ENCODE measurements at regions of chr2 and their contacts with region 1.

Region 1: GRCh38 chr2:142140434-142140845 is 9.6 kb upstream of the LRP1B start:
- DNase-seq: no peak
- H3K4me3 ChIP-seq: no peak overlapping the region
- H3K27me3 ChIP-seq: no peaks in the 10 kb centered on the region
- CTCF ChIP-seq: peak; percentile 45

Region 2: DNA sequence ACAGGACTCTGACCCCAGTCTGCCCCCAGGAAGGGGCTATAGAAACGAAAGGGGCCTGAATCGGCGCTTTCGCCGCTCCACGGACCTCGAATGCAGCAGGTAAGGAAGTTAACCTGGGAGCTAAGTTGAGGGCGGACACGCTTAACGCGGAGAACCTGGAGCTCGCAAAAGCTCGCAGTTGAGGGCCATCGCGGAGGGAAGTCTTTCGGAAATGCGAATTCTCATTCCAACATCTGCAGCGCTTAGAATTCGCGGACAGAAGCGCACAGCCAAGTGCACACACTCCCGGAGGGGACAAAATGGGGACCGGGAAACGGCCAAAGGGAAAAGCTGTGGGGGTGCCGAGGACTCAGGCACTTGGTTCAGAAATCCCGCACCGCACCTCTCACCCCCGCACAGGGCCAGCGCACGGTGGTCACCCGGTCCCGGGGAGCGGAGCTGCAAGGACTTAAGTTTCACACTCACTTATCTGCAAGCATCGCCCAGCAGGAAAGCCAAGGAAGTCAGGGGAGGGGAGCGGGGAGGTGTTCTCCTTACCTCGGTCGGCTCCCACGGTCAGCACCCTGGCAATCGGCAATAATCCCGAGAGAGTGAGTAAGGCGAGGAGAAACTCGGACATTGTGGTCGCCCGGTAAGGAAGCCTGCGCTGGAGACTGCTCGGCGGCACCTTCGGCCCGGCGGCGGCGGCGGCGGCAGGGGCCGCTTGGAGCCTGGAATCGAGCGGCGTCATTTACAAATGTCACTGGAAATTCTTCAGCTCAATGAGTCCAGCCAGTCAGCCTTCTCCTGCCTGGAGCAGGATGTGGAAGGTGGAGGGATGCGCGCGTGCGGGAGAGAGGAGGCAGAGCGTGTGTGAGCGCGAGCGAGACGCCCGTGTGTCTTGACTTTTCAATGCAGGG is 10.1 kb before region 1 on chr2:
- CTCF ChIA-PET with region 1: interaction called, 24 read pairs
- POLR2A ChIA-PET with region 1: no interaction called
- DNase-seq: no peak
- H3K4me3 ChIP-seq: peak overlapping the region; percentile 50
- H3K27me3 ChIP-seq: peaks cover 5% of the 10 kb centered on the region; the same call in 1 of the 2 replicates
- CTCF ChIP-seq: no peak